ENCODE measurements at regions of chr6 and their contacts with region 1.

Region 1: DNA sequence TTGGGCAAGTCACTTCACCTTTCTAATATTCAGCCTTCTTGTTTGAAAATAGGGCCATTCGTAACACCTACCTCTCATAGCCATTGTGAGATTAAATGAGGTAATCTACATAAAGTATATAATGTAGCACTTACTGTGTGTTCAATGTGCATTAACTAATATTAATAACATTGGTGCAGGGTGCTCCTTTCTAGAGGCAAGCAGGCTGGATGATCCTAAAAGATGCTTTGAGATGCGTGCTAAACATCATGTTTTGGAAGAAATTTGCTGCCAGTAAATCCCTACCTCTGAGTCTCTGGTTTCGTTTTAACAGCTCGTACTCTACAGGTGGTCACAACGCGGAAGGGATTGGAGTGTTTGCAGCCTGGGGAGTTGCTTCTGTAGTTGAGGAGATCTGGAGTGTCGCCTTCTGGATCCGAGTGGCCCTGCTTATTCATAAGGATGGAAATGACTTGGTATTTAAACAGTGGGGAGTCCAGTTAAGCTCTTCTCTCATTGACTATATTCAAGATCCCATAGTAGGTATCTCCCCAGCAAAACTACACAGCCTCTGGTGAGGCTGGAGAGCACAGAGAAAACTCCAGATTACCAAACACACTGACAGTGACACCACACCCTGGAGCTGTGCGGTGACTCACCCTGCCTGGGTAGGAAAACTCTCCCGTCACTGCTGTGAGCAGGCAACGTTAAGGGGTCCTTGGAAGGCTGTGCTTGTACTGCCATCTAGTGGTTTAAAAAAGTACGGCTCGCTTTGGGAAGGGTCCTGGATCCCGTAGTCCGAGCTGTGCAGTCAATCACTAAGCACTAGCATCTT is 107.9 kb downstream of the MAP3K7 start:
- DNase-seq: peak; percentile 94
- H3K4me3 Mint-ChIP-seq: no peak overlapping the region
- H3K27ac Mint-ChIP-seq: peak overlapping the region; percentile 81
- H3K4me1 Mint-ChIP-seq: peaks cover 60% of the 10 kb centered on the region
- H3K27me3 Mint-ChIP-seq: no peaks in the 10 kb centered on the region

Region 2: GRCh38 chr6:89432875-89433251 is 1046.1 kb before region 1 on chr6 and contains the start of gene ANKRD6:
- CTCF ChIA-PET with region 1: no interaction called
- intact Hi-C with region 1: loop called (anchors 1 kb)
- DNase-seq: peak; percentile 77
- H3K4me3 Mint-ChIP-seq: peak within 1 kb of the TSS; percentile 69
- H3K27ac Mint-ChIP-seq: no peak within 1 kb of the TSS
- H3K4me1 Mint-ChIP-seq: peaks cover 10% of the 10 kb centered on the region
- H3K27me3 Mint-ChIP-seq: no peaks in the 10 kb centered on the region
- total RNA-seq, gene ANKRD6: 1.5 to 1.6 TPM

Region 3: DNA sequence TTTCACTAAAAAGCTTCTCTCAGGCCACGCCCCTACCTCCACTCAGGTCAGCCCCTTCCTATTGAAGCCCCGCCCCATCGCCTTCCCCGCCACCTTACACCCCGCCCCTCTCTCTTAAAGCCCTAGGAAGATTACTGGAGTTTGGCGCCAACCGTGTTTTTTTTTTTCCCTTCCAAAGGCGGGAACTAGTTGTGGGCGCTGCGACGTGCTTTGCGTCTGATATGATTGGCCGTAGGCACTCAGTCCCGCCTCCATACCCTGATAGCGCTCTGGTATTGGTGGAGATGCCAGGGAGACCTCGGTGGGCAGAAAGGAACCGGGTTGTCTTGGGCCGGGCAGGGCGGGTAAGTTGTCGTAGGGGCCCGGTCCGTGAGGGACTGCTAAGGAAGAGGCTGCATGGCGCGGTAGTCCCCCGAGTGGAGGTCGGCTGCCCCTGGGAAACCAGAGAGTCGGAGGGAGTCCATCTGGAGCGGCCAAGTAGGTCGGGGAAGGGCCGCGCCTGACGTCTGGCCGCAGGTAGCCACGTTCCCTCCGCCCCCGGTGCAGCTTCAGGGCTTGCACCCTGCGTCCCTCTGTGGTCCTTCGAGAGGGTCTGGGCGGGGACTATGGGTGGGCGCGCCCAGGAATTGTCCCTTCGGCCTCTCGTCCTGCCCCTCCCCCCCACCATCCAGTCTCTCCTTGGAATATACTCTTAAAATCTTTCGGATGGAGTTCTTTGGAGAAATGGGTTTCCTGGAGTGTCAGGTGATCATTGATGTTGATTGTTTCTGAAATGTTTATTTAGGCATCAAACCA is 649.2 kb before region 1 on chr6 and contains the start of gene CASP8AP2:
- CTCF ChIA-PET with region 1: no interaction called
- intact Hi-C with region 1: loop called (anchors 2 kb)
- DNase-seq: peak; percentile 98
- H3K4me3 Mint-ChIP-seq: peak within 1 kb of the TSS; percentile 99
- H3K27ac Mint-ChIP-seq: peak within 1 kb of the TSS; percentile 96
- H3K4me1 Mint-ChIP-seq: peaks cover 33% of the 10 kb centered on the region
- H3K27me3 Mint-ChIP-seq: no peaks in the 10 kb centered on the region
- total RNA-seq, gene CASP8AP2: 27.4 to 30.2 TPM

Region 4: GRCh38 chr6:89970609-89971337 is 508.2 kb before region 1 on chr6:
- CTCF ChIA-PET with region 1: interaction called, 4 read pairs
- intact Hi-C with region 1: loop called (anchors 1 kb)
- DNase-seq: peak; percentile 36
- H3K4me3 Mint-ChIP-seq: no peak overlapping the region
- H3K27ac Mint-ChIP-seq: no peak overlapping the region
- H3K4me1 Mint-ChIP-seq: peaks cover 54% of the 10 kb centered on the region
- H3K27me3 Mint-ChIP-seq: no peaks in the 10 kb centered on the region

Region 5: GRCh38 chr6:90296346-90297114 is 182.5 kb before region 1 on chr6 and contains the start of gene BACH2:
- CTCF ChIA-PET with region 1: interaction called, 176 read pairs
- intact Hi-C with region 1: no loop called
- DNase-seq: peak; percentile 99
- H3K4me3 Mint-ChIP-seq: peak within 1 kb of the TSS; percentile 86
- H3K27ac Mint-ChIP-seq: peak within 1 kb of the TSS; percentile 97
- H3K4me1 Mint-ChIP-seq: peaks cover 41% of the 10 kb centered on the region
- H3K27me3 Mint-ChIP-seq: peaks cover 2% of the 10 kb centered on the region
- total RNA-seq, gene BACH2: 75.1 to 77.9 TPM

Region 6: DNA sequence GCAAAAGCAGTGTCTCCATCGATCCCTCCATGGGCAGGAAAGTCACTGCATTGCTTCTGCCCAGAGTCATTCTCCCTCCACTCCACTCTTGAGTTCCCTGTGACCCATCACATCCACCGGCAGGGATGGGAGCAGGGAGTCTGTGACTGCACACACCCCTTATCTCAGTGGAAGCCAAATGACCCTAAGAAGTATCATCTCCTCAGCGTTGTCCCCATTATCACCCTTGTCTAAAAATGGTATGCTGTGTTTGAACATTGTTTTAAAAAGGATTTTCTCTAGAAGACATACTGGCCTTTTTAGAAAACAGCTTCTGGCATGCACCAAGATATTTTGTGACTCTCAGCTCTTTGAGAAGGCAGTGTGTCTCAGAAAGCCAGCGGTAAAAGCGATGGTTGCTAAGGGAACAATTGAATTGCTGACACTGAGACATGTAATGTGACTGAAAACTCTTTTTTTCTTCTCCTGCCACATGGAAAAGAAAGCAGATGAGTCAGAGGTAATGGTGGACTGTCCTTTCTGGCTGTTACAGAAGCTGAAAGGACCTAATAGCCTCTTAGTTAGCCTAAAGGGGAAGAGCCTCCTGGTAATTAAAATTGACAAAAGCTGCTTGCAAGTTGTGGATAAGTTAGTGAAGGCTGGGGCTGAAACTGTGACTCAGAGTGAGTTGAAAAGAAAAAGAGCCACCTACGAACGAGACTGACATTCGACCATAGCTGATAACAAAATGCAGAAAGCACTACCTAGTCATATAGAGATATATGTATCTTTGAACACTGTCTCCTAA is 12.6 kb before region 1 on chr6:
- CTCF ChIA-PET with region 1: interaction called, 13 read pairs
- intact Hi-C with region 1: loop called (anchors 1 kb)
- DNase-seq: peak; percentile 73
- H3K4me3 Mint-ChIP-seq: no peak overlapping the region
- H3K27ac Mint-ChIP-seq: peak overlapping the region; percentile 90
- H3K4me1 Mint-ChIP-seq: peaks cover 82% of the 10 kb centered on the region
- H3K27me3 Mint-ChIP-seq: no peaks in the 10 kb centered on the region

Measured in activated naive CD4-positive, alpha-beta T cell treated with anti-CD3 and anti-CD28 coated beads for 36 hours (primary cell).